PC-9 (cell line): ENCODE measurements at regions of chr11 and their contacts with region 1.

Region 1: GRCh38 chr11:15969281-15969680 is 387.1 kb downstream of the SOX6 start:
- DNase-seq: peak; percentile 35 to 48
- H3K4me3 ChIP-seq: no peak overlapping the region; the same call in 1 of the 2 replicates
- H3K27ac ChIP-seq: peak overlapping the region; percentile 63
- H3K4me1 ChIP-seq: peaks cover 61% of the 10 kb centered on the region
- H3K27me3 ChIP-seq: no peaks in the 10 kb centered on the region
- CTCF ChIP-seq: no peak

Region 2: GRCh38 chr11:15692669-15693068 is 276.6 kb before region 1 on chr11:
- CTCF ChIA-PET with region 1: no interaction called
- POLR2A ChIA-PET with region 1: no interaction called
- intact Hi-C with region 1: no loop called
- DNase-seq: peak in 1 of 2 experiments; percentile 48
- H3K4me3 ChIP-seq: no peak overlapping the region
- H3K27ac ChIP-seq: no peak overlapping the region
- H3K4me1 ChIP-seq: peaks cover 14% of the 10 kb centered on the region
- H3K27me3 ChIP-seq: no peaks in the 10 kb centered on the region
- CTCF ChIP-seq: no peak

Region 3: GRCh38 chr11:15819679-15820286 is 149.5 kb before region 1 on chr11:
- CTCF ChIA-PET with region 1: no interaction called
- POLR2A ChIA-PET with region 1: no interaction called
- intact Hi-C with region 1: loop called (anchors 2 kb)
- DNase-seq: no peak
- H3K4me3 ChIP-seq: no peak overlapping the region
- H3K27ac ChIP-seq: no peak overlapping the region
- H3K4me1 ChIP-seq: peaks cover 31% of the 10 kb centered on the region
- H3K27me3 ChIP-seq: no peaks in the 10 kb centered on the region
- CTCF ChIP-seq: no peak; the same call in 1 of the 2 replicates

Region 4: GRCh38 chr11:15893080-15893492 is 76.2 kb before region 1 on chr11:
- CTCF ChIA-PET with region 1: no interaction called
- POLR2A ChIA-PET with region 1: no interaction called
- intact Hi-C with region 1: loop called (anchors 2 kb)
- DNase-seq: peak; percentile 58 to 87
- H3K4me3 ChIP-seq: no peak overlapping the region
- H3K27ac ChIP-seq: peak overlapping the region; percentile 44
- H3K4me1 ChIP-seq: peaks cover 29% of the 10 kb centered on the region
- H3K27me3 ChIP-seq: no peaks in the 10 kb centered on the region
- CTCF ChIP-seq: no peak

Region 5: DNA sequence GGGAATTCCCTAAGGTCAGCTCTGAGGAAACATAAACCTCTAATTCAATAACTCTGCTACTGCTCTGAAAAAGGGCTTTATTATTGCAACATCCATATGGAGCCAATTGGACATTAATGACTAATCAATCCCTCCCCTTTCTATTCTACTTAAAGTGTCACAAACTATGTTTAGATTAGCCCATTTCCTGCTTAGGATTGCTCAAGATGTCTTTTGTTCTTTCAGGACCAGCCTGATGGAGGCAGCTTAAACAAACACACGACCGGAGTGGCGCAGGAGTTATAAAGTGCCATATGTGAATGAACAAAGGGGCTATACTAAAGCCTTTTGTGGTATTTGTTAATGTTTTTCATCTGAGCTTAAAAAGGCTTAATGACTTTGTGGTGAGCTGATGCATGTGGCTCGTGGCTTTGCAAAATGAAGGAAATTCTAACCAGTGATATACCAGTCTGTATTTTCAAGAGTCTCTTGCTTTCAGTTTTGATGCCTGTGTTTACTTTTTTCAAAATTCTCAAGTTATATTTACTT is 32.7 kb after region 1 on chr11:
- CTCF ChIA-PET with region 1: no interaction called
- POLR2A ChIA-PET with region 1: interaction called, 3 read pairs
- intact Hi-C with region 1: loop called (anchors 5 kb)
- DNase-seq: peak; percentile 37 to 91
- H3K4me3 ChIP-seq: peak overlapping the region; percentile 8; the same call in 1 of the 2 replicates
- H3K27ac ChIP-seq: peak overlapping the region; percentile 66
- H3K4me1 ChIP-seq: peaks cover 16% of the 10 kb centered on the region
- H3K27me3 ChIP-seq: no peaks in the 10 kb centered on the region
- CTCF ChIP-seq: no peak

Region 6: GRCh38 chr11:16154715-16155396 is 185.6 kb after region 1 on chr11:
- CTCF ChIA-PET with region 1: no interaction called
- POLR2A ChIA-PET with region 1: no interaction called
- intact Hi-C with region 1: loop called (anchors 2 kb)
- DNase-seq: peak; percentile 45 to 83
- H3K4me3 ChIP-seq: 0 out of 2 replicates have a peak overlapping the region, but pooled peaks have one; percentile 13
- H3K27ac ChIP-seq: peak overlapping the region; percentile 76
- H3K4me1 ChIP-seq: peaks cover 25% of the 10 kb centered on the region
- H3K27me3 ChIP-seq: no peaks in the 10 kb centered on the region
- CTCF ChIP-seq: no peak

Region 7: GRCh38 chr11:16382638-16383380 is 413.5 kb after region 1 on chr11:
- CTCF ChIA-PET with region 1: interaction called, 30 read pairs
- POLR2A ChIA-PET with region 1: no interaction called
- intact Hi-C with region 1: no loop called
- DNase-seq: no peak
- H3K4me3 ChIP-seq: no peak overlapping the region
- H3K27ac ChIP-seq: no peak overlapping the region
- H3K4me1 ChIP-seq: no peaks in the 10 kb centered on the region
- H3K27me3 ChIP-seq: no peaks in the 10 kb centered on the region
- CTCF ChIP-seq: no peak